ENCODE measurements at regions of chr17 and their contacts with region 1.

Region 1: DNA sequence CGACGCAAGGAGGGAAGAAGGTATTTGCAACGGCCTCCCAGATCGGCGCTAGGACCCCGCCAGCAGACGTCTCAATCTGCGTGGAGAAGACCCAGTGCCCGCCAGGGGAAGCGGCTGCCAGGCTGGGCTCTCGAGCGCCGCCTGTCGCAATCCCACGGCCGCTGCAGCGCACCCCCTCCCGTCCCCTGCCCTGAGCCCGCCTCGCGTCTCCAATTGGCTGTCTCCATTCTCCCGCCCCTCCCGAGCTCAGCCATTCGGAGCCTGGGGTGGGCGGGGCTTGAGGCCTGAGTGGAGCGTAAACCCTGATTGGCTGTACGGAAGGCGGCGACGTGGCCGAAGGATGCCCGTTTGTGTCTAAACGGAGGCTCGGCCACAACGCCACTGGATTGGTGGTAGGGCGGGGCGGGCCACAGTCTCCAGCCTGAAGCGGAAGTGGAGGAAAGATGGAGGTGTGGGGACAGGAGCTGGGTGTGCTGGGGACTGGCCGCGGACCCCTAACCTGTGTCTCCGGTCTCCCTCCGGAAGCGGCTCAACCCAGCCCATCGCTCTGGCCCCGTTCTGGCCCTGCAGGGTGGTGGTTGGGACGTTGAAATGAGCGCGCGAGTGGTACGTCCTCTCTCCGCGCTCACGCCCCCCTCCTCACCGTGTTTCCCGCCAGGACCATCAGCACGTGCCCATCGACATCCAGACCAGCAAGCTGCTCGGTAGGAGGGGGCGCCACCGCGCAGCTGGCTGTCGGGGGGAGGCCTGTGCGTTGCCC is at the start of gene CDK5RAP3:
- DNase-seq: peak; percentile 100
- ATAC-seq: peak; percentile 93
- H3K4me3 ChIP-seq: peak within 1 kb of the TSS; percentile 69 to 82
- H3K27ac ChIP-seq: peak within 1 kb of the TSS; percentile 66
- H3K4me1 ChIP-seq: peaks cover 19 to 51% of the 10 kb centered on the region in 2 experiments
- H3K27me3 ChIP-seq: no peaks in the 10 kb centered on the region
- CTCF ChIP-seq: peak; percentile 96 to 98 (median 98)
- POLR2A ChIP-seq: peak; percentile 46
- RAD21 ChIP-seq: peak; percentile 94
- total RNA-seq, gene CDK5RAP3: 255 TPM

Region 2: GRCh38 chr17:47323382-47324222 is 647.3 kb before region 1 on chr17 and contains the start of gene EFCAB13:
- CTCF ChIA-PET with region 1: no interaction called
- POLR2A ChIA-PET with region 1: no interaction called
- RAD21 ChIA-PET with region 1: no interaction called
- intact Hi-C with region 1: no loop called
- DNase-seq: no peak
- ATAC-seq: peak; percentile 66
- H3K4me3 ChIP-seq: no peak within 1 kb of the TSS
- H3K27ac ChIP-seq: no peak within 1 kb of the TSS
- H3K4me1 ChIP-seq: no peaks in the 10 kb centered on the region
- H3K27me3 ChIP-seq: no peaks in the 10 kb centered on the region
- CTCF ChIP-seq: no peak
- POLR2A ChIP-seq: no peak
- RAD21 ChIP-seq: no peak
- total RNA-seq, gene EFCAB13: not detected

Region 3: DNA sequence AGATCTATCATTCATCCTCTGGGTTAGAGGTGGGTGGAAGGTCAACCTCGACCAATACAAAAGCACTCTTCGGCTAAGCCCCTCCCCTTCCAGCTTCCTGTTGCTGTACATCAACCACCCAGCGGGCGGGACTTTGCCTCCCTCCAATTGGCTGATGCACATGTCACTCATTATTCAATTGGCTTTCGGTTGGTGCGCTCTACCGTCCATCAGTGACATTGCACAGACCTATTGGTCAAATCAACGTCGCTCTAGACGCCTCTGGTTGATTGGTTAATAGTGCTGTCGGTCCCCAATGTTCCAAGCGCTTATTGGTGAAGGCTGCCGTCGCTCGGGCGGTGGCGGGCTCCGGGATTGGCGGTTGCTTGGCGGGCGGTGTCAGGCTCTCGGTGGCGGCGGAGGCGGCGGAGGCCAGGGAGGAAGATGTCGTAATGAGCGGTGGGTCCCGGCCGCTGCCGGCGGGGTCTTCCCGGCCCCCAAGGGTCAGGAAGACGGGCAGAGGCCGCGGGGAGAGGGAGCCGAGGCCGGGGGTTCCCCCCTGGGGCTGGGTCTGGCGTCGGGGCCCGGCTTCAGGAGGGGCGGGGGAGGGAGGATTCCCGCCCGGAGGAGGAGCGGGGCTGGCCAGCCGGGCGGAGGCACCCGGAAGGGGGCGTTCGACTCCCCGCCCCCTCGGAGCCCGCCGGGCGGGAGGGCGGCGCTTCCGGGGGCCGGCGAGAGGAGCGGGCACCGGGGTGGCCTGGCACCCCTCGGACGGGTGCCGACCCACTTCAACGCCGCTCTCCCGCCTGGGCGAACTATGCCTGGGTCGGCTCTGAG is 74.8 kb before region 1 on chr17 and contains the start of gene SP2:
- CTCF ChIA-PET with region 1: interaction called, 9 read pairs
- POLR2A ChIA-PET with region 1: interaction called, 28 read pairs
- RAD21 ChIA-PET with region 1: interaction called in 1 of 2 experiments, 4 read pairs
- intact Hi-C with region 1: loop called (anchors 1 kb)
- DNase-seq: peak; percentile 100
- ATAC-seq: peak; percentile 92
- H3K4me3 ChIP-seq: peak within 1 kb of the TSS; percentile 84 to 87
- H3K27ac ChIP-seq: peak within 1 kb of the TSS; percentile 78
- H3K4me1 ChIP-seq: peaks cover 4 to 28% of the 10 kb centered on the region in 2 experiments; a peak in 3 of 4 replicates
- H3K27me3 ChIP-seq: no peaks in the 10 kb centered on the region
- CTCF ChIP-seq: no peak
- POLR2A ChIP-seq: peak; percentile 65
- RAD21 ChIP-seq: no peak
- total RNA-seq, gene SP2: 22.2 TPM

Region 4: GRCh38 chr17:47949136-47949759 is 21.6 kb before region 1 on chr17:
- CTCF ChIA-PET with region 1: interaction called, 42 read pairs
- POLR2A ChIA-PET with region 1: interaction called, 20 read pairs
- RAD21 ChIA-PET with region 1: interaction called, 6 to 9 read pairs
- intact Hi-C with region 1: loop called (anchors 1 kb)
- DNase-seq: peak; percentile 67
- ATAC-seq: peak; percentile 81
- H3K4me3 ChIP-seq: peak overlapping the region; percentile 29 to 40
- H3K27ac ChIP-seq: peak overlapping the region; percentile 67
- H3K4me1 ChIP-seq: peaks cover 30 to 51% of the 10 kb centered on the region in 2 experiments
- H3K27me3 ChIP-seq: no peaks in the 10 kb centered on the region
- CTCF ChIP-seq: peak; percentile 96 to 99 (median 98)
- POLR2A ChIP-seq: no peak
- RAD21 ChIP-seq: peak; percentile 97

Region 5: GRCh38 chr17:48002266-48002915 is 31.5 kb after region 1 on chr17:
- CTCF ChIA-PET with region 1: interaction called, 16 read pairs
- POLR2A ChIA-PET with region 1: interaction called, 8 read pairs
- RAD21 ChIA-PET with region 1: no interaction called
- intact Hi-C with region 1: no loop called
- DNase-seq: no peak
- ATAC-seq: peak; percentile 54
- H3K4me3 ChIP-seq: no peak overlapping the region
- H3K27ac ChIP-seq: peak overlapping the region; percentile 20; the same call in 1 of the 2 replicates
- H3K4me1 ChIP-seq: peaks cover 16 to 41% of the 10 kb centered on the region in 2 experiments
- H3K27me3 ChIP-seq: no peaks in the 10 kb centered on the region
- CTCF ChIP-seq: no peak
- POLR2A ChIP-seq: no peak
- RAD21 ChIP-seq: no peak

Measured in HCT116 (cell line).